Motor neuron (in vitro differentiated cells): ENCODE measurements at regions of chr6 and their contacts with region 1.

Region 1: DNA sequence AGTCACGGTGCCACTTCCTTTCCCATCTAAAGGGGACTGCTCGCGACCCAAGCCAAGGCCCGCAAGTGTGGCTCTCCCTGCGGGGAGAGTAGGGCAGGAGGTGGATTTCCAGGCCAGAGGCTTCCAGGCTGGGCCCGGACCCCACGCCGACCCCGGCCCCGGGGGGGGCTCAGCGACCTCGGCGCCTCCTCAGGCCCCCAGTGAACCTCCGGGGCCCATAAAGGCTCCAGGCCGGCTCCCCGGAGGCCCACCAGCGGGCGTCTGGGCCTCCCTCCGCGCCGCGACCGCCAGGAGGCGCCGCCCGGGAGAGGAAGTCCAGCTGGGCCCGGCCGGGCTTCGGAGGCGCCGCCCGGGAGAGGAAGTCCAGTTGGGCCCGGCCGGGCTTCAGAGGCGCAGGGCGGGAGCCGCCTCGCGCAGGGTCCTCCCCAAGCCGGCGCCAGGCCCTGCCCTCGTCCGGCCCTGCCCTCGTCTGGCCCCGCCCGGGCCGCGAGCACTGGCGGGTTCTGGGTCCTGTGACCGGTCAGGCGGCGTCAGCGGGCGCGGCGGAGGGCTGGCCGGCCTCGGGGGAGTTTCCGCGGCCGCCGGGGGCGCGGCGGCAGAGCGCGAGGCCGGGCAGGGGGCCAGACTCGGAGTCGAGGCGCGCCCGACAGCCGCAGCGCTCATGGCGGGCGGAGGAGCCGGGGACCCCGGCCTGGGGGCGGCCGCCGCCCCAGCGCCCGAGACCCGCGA is at the start of gene RAB32:
- ATAC-seq: peak; percentile 90 to 97 (median 96)
- H3K4me3 ChIP-seq: peak within 1 kb of the TSS; percentile 37 to 70 (median 54)
- H3K27ac ChIP-seq: peak within 1 kb of the TSS in 1 of 2 donors; percentile 77
- H3K4me1 ChIP-seq: peaks cover 0 to 6% of the 10 kb centered on the region in 2 donors
- total RNA-seq, gene RAB32: 3.1 to 91.4 (median 8.2) TPM

Region 2: GRCh38 chr6:146028293-146028691 is 515.1 kb before region 1 on chr6:
- in situ Hi-C with region 1: loop called in 2 of 9 experiments (anchors 25 kb)
- ATAC-seq: peak; percentile 72 to 100 (median 85)
- H3K4me3 ChIP-seq: peak overlapping the region; percentile 27 to 41 (median 32)
- H3K27ac ChIP-seq: no peak overlapping the region
- H3K4me1 ChIP-seq: no peaks in the 10 kb centered on the region